Breast epithelium (tissue), 4 donors: ENCODE measurements at regions of chr5 and their contacts with region 1.

Region 1: GRCh38 chr5:112968411-112969106 is 8.0 kb upstream of the DCP2 start:
- DNase-seq: no peak
- H3K4me3 ChIP-seq: no peak overlapping the region
- H3K27ac ChIP-seq: peak overlapping the region; percentile 57 to 63
- H3K4me1 ChIP-seq: peaks cover 0 to 5% of the 10 kb centered on the region in 2 donors
- H3K27me3 ChIP-seq: no peaks in the 10 kb centered on the region
- CTCF ChIP-seq: no peak
- POLR2A ChIP-seq: no peak

Region 2: GRCh38 chr5:112951124-112951702 is 17.3 kb before region 1 on chr5:
- intact Hi-C with region 1: loop called (anchors 2 kb)
- DNase-seq: no peak
- H3K4me3 ChIP-seq: no peak overlapping the region
- H3K27ac ChIP-seq: no peak overlapping the region
- H3K4me1 ChIP-seq: no peaks in the 10 kb centered on the region
- H3K27me3 ChIP-seq: no peaks in the 10 kb centered on the region
- CTCF ChIP-seq: no peak
- POLR2A ChIP-seq: no peak